SK-N-SH (cell line): ENCODE measurements at regions of chr17 and their contacts with region 1.

Region 1: DNA sequence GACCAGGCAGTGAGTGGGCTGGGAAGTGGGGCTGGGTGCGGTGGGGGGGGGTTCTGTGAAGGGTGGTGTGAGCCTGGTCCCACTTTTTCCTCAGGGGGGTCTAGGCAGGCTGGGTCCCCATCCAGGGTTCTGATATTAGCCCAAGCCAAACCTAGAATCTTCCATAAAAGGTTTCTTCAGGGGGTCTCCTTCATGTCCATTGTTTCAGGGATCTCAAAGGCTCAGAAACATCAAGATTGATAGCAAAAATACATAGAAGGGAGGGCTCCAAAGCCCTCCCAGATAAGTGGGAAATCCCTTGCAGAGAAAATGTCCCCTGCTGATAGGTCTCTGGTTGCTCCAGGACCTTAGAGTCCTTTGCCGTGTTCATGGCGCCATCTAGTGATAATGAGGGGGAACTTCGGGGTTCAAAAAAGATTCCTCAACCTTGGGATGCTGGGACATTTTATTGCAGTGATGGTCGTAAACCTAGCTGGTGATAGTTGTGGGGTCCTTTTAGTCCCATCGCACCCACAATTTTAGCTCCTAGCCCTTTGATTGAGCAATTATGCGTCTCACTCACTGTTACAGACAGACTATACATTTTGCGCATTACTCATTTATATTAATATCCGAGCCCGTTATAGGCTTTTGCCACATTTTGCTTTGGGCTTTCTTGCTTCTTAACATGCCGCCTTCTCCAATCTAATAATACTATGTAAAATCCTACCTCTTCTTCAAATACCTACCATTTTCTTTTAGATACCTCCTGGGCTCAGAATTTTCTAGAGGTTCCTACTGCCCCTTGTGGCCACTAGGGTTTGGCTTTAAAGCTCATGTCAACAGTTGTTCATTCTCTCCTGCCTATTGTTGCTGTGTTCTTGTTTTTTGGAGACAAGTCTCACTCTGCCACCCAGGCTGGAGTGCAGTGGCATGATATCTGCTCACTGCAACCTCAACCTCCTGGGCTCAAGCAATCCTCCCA is 35.1 kb downstream of the IGF2BP1 start:
- DNase-seq: peak; percentile 88
- H3K4me3 ChIP-seq: peak overlapping the region in 1 of 2 experiments; percentile 28; a peak in 1 of 4 replicates
- H3K27ac ChIP-seq: no peak overlapping the region
- H3K4me1 ChIP-seq: peaks cover 0 to 6% of the 10 kb centered on the region in 2 experiments; a peak in 1 of 4 replicates
- H3K27me3 ChIP-seq: peaks cover 34% of the 10 kb centered on the region; the same call in 1 of the 2 replicates
- CTCF ChIP-seq: peak; percentile 95
- EP300 ChIP-seq: no peak
- RAD21 ChIP-seq: peak; percentile 98

Region 2: DNA sequence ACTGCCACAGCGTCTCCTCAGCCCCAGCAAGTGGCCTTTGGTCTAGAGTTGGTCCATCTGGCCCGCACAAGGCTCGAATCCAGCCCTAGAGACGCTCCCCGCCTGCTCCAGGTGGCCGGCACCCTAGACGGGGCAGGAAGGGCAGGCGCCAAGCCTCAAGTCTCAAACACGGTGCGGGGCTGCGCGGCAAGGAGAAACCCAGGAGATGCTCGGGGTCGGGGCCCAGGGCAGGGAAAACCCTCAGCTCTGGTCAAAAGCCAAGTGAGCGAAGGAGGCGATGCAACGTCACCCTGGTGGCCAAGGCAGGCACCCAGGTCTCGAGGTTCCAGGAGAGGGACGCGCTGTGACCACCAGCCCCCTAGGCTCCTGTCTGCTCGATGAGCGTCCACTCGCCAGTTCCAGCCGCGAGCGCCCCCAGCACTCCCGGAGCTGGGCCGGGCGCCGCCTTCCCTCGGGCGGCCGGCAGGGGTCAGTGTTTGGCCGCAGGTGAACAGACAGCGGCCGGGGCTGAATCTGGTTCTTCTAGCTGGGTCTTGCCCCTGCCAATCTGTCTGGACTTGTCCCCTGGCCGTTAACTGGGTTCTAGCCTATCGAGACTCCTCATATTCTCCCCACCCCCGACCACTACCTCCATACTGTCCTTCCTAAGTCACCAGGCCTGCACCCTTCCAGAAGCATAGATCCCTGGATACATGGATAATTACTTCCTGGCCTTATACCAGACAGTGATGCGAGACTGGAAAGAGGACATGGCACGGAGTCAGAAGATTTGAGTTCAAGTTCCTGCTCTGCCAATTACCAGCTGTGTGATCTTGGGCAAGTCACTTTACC is 353.9 kb before region 1 on chr17:
- CTCF ChIA-PET with region 1: interaction called, 28 read pairs
- POLR2A ChIA-PET with region 1: no interaction called
- DNase-seq: peak; percentile 87
- H3K4me3 ChIP-seq: peak overlapping the region in 1 of 2 experiments; percentile 29; a peak in 1 of 4 replicates
- H3K27ac ChIP-seq: no peak overlapping the region
- H3K4me1 ChIP-seq: no peaks in the 10 kb centered on the region
- H3K27me3 ChIP-seq: peaks cover 96% of the 10 kb centered on the region
- CTCF ChIP-seq: peak; percentile 98
- EP300 ChIP-seq: no peak
- RAD21 ChIP-seq: peak; percentile 70

Region 3: DNA sequence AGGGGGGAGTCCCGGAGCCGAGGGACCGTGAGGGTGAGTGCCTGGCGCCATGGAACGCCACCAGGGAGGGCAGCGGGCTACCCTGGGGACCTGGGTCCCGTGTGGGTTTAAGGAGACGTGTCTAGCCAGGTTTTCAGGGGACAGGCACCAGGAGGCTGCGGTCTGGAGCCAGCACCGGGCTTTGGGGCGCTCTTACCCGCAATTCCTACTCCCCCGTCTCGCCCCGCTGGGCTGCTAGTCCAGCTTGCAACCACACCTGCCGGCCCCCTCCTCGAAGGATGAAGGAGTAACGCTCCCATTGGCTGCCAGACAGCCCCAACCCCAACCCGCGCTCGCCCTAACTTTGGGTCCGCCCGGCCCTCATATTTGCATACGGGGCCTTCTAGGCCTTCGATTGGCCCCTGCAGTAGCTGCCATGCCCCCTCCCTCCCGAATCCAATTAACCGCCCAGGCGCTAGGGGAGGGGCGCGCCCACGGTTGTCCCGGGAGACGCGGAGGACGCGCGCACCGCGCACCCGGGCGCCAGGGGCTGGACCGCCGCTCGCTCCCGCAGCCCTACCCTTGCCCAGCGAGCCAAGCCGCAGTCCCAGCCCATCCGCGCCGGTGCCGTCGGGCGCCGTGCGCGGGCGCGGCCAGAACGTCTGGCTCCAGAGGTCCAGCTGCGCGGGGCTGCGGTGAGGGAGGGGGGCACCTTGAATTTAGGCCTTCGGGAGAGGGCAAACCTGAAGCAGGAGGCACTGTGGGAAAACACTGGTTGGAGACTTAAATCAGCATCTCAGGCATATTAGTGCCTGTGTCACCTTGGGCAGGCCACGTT is 215.3 kb before region 1 on chr17 and contains the start of gene TTLL6:
- CTCF ChIA-PET with region 1: interaction called, 22 read pairs
- POLR2A ChIA-PET with region 1: interaction called, 3 read pairs
- DNase-seq: peak; percentile 97
- H3K4me3 ChIP-seq: peak within 1 kb of the TSS; percentile 45 to 62
- H3K27ac ChIP-seq: no peak within 1 kb of the TSS
- H3K4me1 ChIP-seq: peaks cover 0 to 9% of the 10 kb centered on the region in 2 experiments; a peak in 1 of 4 replicates
- H3K27me3 ChIP-seq: peaks cover 35% of the 10 kb centered on the region; the same call in 1 of the 2 replicates
- CTCF ChIP-seq: no peak
- EP300 ChIP-seq: no peak
- RAD21 ChIP-seq: no peak
- polyA plus RNA-seq, gene TTLL6: 3.1 and 5.1 TPM in 2 replicates

Region 4: GRCh38 chr17:48997083-48997826 is 35.0 kb before region 1 on chr17 and contains the start of gene IGF2BP1:
- CTCF ChIA-PET with region 1: interaction called, 35 read pairs
- POLR2A ChIA-PET with region 1: no interaction called
- DNase-seq: peak; percentile 61
- H3K4me3 ChIP-seq: no peak within 1 kb of the TSS; a peak in 1 of 4 replicates
- H3K27ac ChIP-seq: no peak within 1 kb of the TSS
- H3K4me1 ChIP-seq: no peaks in the 10 kb centered on the region; a peak in 1 of 4 replicates
- H3K27me3 ChIP-seq: peaks cover 86% of the 10 kb centered on the region
- CTCF ChIP-seq: no peak
- EP300 ChIP-seq: no peak
- RAD21 ChIP-seq: no peak
- polyA plus RNA-seq, gene IGF2BP1: 0.02 and 0.05 TPM in 2 replicates

Region 5: GRCh38 chr17:49045376-49045775 is 13.1 kb after region 1 on chr17:
- CTCF ChIA-PET with region 1: interaction called, 64 read pairs
- POLR2A ChIA-PET with region 1: no interaction called
- DNase-seq: no peak
- H3K4me3 ChIP-seq: no peak overlapping the region
- H3K27ac ChIP-seq: no peak overlapping the region
- H3K4me1 ChIP-seq: no peaks in the 10 kb centered on the region
- H3K27me3 ChIP-seq: peaks cover 95% of the 10 kb centered on the region
- CTCF ChIP-seq: no peak
- EP300 ChIP-seq: no peak
- RAD21 ChIP-seq: no peak